ENCODE measurements at regions of chr1 and their contacts with region 1.

Region 1: GRCh38 chr1:246907472-246907871 is 24.3 kb downstream of the AHCTF1 start:
- DNase-seq: no peak
- H3K4me3 ChIP-seq: no peak overlapping the region
- H3K27ac ChIP-seq: no peak overlapping the region
- H3K4me1 ChIP-seq: peaks cover 0 to 31% (median 0%) of the 10 kb centered on the region in 6 donors
- H3K27me3 ChIP-seq: no peaks in the 10 kb centered on the region
- CTCF ChIP-seq: peak in 8 of 11 experiments; percentile 33 to 56 (median 42)
- POLR2A ChIP-seq: no peak

Region 2: DNA sequence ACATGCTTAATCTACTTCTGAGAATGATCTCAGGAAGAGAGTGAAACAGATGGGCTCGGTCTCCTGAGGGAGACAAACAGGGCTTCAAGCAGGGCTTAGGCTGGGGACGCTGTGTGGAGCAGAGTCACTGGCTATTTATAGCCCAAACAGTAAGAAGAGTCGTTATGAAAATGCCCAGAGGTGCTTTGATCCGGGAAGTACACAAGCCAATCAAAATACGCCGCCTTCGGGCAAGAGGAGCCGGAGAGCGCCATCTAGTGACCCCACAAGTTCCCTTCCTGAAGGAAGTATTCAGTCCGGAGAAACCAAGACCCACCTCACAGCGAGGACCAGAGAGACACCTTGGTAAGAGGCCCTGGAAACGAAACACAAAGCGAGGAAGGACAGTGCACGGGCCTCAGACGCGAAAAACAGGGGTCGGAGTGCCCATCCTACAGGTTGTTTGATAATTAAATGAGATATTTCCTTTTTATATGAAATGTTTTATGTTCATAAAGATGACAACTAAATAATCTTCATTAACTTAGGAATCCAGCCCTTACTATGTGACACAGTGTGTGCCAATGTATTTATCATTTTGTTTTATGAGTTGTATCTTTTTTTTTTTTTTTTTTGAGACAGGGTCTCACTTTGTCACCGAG is 208.3 kb before region 1 on chr1:
- intact Hi-C with region 1: no loop called
- DNase-seq: peak; percentile 92
- H3K4me3 ChIP-seq: peak overlapping the region in 3 of 8 donors; percentile 26 to 59 (median 30)
- H3K27ac ChIP-seq: peak overlapping the region in 5 of 8 donors; percentile 12 to 61 (median 49)
- H3K4me1 ChIP-seq: peaks cover 0 to 28% (median 12%) of the 10 kb centered on the region in 6 donors
- H3K27me3 ChIP-seq: peaks cover 0 to 6% (median 0%) of the 10 kb centered on the region in 7 donors
- CTCF ChIP-seq: peak; percentile 55 to 91 (median 81)
- POLR2A ChIP-seq: no peak

Region 3: DNA sequence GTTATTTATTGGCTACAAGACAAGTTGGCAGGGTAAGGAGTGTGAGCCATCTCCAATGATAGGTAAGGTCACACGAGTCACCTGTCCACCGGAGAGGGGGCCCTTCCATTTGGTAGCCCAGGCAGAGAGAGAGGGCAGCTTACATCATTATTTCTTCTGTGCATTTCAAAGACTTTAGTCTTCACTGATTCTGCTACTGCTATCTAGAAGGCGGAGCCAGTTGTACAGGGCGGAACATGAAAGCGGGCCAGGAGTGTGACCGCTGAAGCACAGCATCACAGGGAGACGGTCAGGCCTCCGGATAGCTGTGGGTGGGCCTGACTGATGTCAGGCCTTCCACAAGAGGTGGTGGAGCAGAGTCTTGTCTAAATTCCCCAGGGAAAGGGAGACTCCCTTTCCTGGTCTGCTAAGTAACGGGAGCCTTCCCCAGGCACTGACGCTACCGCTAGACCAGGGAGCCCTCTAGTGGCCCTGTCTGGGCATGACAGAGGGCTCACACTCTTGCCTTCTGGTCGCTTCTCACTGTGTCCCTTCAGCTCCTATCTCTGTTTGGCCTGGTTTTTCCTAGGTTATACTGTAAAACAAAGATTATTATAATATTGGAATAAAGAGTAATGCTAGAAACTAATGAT is 63.7 kb after region 1 on chr1:
- intact Hi-C with region 1: loop called (anchors 10 kb)
- DNase-seq: peak; percentile 81
- H3K4me3 ChIP-seq: peak overlapping the region in 1 of 8 donors; percentile 35
- H3K27ac ChIP-seq: no peak overlapping the region
- H3K4me1 ChIP-seq: peaks cover 0 to 4% (median 0%) of the 10 kb centered on the region in 6 donors
- H3K27me3 ChIP-seq: no peaks in the 10 kb centered on the region
- CTCF ChIP-seq: peak; percentile 46 to 92 (median 82)
- POLR2A ChIP-seq: no peak

Measured in spleen (tissue), 13 donors.